ENCODE measurements at regions of chr3 and their contacts with region 1.

Region 1: DNA sequence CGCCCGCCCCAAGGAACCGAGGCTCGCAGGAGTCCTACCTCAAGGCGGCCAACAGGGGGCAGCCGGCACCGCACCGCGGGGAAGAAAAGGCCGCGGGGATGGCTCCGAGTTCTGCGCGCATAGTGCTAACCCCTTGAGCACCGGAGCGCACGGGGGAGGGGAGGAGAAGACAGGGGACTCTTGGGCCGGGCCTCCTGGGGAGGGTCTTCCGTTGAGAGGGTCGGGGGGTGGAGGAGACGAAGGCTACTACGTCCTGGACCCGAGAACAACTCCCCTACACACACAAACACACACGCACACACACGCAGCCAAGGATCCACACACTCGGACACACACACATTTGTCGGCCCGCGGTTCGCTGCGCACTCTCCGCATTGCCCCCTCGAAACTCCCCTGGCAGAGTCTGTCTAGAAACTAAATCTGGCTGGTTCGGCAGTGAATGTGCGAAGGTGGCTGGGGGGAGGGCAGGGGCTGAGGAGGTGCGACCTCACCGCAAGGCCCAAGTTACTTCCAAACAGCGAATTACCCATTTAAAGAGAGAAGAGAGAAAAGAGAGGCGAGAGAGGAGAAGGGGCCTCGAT is 1.8 kb downstream of the WNT5A start:
- DNase-seq: peak; percentile 91
- H3K4me3 ChIP-seq: peak overlapping the region; percentile 73
- CTCF ChIP-seq: peak; percentile 73

Region 2: DNA sequence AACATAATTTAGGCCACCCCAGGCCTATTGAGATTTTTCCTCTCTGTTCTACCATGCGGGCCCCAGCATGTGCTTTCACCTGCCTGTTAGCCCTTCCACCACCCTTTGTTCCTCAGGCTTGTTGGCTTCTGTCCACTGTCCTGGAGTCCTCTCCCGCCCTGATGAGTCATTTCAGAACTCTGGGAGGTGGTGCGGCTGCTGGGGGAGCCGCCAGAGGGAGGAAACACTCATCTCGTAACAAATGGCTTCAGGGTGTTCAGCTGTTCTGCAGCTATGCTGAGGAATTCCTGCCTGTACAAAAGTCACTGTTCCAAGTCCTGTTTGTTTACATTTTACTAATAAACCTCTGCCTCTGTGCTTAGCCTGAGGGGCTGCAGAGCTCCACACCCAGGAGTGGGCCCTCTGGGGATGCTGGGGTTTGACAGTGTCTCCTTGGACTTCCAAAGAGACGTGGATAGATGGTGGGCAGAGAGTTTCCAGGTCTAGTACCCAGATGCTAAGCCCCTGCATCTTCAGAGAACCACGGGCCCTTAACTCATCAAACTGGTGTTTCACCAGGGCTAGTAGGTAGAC is 593.7 kb before region 1 on chr3:
- in situ Hi-C with region 1: loop called (anchors 25 kb)
- DNase-seq: peak; percentile 99
- H3K4me3 ChIP-seq: no peak overlapping the region
- CTCF ChIP-seq: peak; percentile 67

Region 3: DNA sequence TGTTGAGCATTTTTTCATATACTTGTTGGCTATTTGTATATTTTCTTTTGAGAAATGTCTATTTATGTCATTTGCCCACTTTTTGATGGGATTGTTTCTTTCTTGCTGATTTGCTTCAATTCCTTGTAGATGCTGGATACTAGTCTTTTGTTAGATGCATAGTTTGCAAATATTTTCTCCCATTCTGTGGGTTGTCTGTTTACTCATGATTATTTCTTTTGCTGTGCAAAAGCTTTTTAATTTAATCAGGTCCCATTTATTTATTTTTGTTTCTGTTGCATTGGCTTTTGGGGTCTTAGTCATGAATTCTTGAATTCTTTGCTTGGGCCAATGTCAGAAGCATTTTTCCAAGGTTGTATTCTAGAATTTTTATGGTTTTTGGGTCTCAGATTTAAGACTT is 249.9 kb before region 1 on chr3:
- in situ Hi-C with region 1: no loop called
- DNase-seq: peak; percentile 12
- H3K4me3 ChIP-seq: no peak overlapping the region
- CTCF ChIP-seq: no peak